Activated B cell treated with CpG ODN at 0.5 μM for 24 hours (primary cell): ENCODE measurements at regions of chrX and their contacts with region 1.

Region 1: GRCh38 chrX:31293409-31293808 is 221.6 kb upstream of the FTHL17 start:
- DNase-seq: no peak
- ATAC-seq: peak; percentile 58
- H3K4me3 Mint-ChIP-seq: no peak overlapping the region
- H3K27ac Mint-ChIP-seq: no peak overlapping the region
- H3K4me1 Mint-ChIP-seq: no peaks in the 10 kb centered on the region
- H3K27me3 Mint-ChIP-seq: no peaks in the 10 kb centered on the region
- CTCF ChIP-seq: no peak

Region 2: GRCh38 chrX:30971774-30972603 is 321.4 kb before region 1 on chrX:
- CTCF ChIA-PET with region 1: no interaction called
- POLR2A ChIA-PET with region 1: no interaction called
- intact Hi-C with region 1: loop called (anchors 1 kb)
- DNase-seq: no peak
- ATAC-seq: peak; percentile 57
- H3K4me3 Mint-ChIP-seq: peak overlapping the region; percentile 75
- H3K27ac Mint-ChIP-seq: no peak overlapping the region
- H3K4me1 Mint-ChIP-seq: peaks cover 6% of the 10 kb centered on the region
- H3K27me3 Mint-ChIP-seq: no peaks in the 10 kb centered on the region
- CTCF ChIP-seq: no peak

Region 3: DNA sequence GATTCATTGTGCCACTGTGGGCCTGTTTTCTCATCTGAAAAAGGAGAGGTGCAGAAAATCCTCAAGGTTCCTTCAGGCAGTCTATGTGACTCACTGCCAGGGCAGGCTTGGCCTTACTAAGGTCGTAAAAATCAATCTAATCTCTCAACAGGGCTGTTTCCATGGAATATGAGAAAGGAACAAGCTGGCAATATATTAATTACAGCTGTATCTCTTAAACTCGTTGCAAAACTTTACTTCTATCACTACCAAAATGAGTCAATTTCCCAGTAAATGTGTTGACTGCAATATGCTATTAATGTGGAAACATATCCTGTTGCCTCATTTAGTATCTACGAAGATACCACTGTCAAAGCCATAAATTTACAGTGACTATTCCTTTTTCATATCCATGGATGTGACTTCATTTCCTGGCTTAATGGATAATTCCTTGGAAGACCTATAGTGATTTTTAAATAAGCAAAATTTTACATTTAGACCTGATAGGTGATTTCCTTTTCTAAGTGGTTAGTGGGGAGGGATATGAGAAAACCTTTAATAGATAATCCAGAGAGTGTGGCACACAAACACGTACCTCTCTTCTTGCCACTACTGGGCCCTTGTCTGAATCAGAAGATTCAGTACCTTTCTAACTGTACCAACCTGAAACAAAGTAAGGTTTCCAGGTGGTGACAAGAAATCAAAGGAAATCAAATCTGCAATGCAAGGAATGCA is 94.2 kb before region 1 on chrX:
- CTCF ChIA-PET with region 1: no interaction called
- POLR2A ChIA-PET with region 1: no interaction called
- intact Hi-C with region 1: no loop called
- DNase-seq: no peak
- ATAC-seq: no peak
- H3K4me3 Mint-ChIP-seq: no peak overlapping the region
- H3K27ac Mint-ChIP-seq: no peak overlapping the region
- H3K4me1 Mint-ChIP-seq: no peaks in the 10 kb centered on the region
- H3K27me3 Mint-ChIP-seq: no peaks in the 10 kb centered on the region
- CTCF ChIP-seq: no peak

Region 4: DNA sequence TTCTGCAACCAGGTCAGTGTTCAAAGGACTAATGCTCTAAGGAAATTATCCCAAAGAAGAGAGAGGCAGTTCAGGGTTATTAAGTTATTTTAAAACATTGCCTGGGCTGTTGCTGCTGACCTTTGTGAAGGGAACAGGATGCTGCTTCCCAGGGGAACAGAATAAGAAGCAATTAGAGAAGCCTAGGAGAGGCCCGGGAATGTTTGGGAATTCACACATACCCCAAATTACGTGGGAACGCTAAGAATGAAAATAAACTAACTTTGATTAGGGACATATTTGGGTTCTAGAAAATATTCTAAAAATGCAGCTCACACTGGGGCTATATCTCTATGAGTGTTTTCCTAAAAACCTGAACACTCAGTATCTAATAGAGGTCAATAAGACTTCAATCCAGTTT is 21.5 kb after region 1 on chrX:
- CTCF ChIA-PET with region 1: no interaction called
- POLR2A ChIA-PET with region 1: no interaction called
- intact Hi-C with region 1: no loop called
- DNase-seq: no peak
- ATAC-seq: no peak
- H3K4me3 Mint-ChIP-seq: no peak overlapping the region
- H3K27ac Mint-ChIP-seq: no peak overlapping the region
- H3K4me1 Mint-ChIP-seq: no peaks in the 10 kb centered on the region
- H3K27me3 Mint-ChIP-seq: no peaks in the 10 kb centered on the region
- CTCF ChIP-seq: no peak